PC-9 (cell line): ENCODE measurements at regions of chr7 and their contacts with region 1.

Region 1: DNA sequence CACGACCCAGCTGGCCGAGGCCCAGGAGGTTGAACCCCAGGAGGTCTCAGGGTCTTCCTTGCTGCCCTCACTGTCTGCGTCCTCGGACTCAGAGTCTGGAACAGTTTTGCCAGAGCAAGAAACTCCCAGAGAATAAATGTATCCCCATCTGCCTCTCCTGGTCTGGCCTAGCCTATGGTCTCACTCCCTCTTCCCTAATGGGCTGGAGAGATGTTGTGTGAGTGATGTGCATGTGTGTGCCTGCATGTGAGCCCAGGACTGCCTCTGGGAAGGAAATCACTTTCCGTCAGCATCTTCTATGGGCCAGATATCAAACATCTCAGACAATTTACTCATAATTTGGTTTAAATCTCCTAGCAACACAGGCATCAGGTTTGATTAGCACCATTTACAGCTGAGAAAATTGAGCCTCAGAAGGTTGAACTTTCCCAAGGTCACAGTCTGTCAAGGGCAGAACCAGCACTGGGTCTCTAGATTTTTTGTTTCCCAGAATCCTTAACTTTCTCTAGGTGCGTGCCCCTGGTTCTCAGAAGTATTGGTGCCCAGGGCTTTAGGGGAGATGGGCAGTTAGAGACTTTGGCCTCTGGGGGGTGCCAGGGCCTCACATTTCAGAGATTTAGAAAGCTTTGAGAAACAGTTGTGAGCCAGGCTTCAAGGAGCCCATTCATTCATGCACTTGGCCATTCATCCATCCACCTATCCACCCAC is 4.9 kb downstream of the TMEM270 start:
- DNase-seq: peak in 1 of 2 experiments; percentile 57
- H3K4me3 ChIP-seq: no peak overlapping the region
- H3K27ac ChIP-seq: no peak overlapping the region
- H3K4me1 ChIP-seq: no peaks in the 10 kb centered on the region
- H3K27me3 ChIP-seq: no peaks in the 10 kb centered on the region
- CTCF ChIP-seq: peak; percentile 78

Region 2: GRCh38 chr7:73786588-73786987 is 79.3 kb before region 1 on chr7:
- CTCF ChIA-PET with region 1: interaction called, 11 read pairs
- POLR2A ChIA-PET with region 1: no interaction called
- intact Hi-C with region 1: no loop called
- DNase-seq: no peak
- H3K4me3 ChIP-seq: no peak overlapping the region
- H3K27ac ChIP-seq: no peak overlapping the region
- H3K4me1 ChIP-seq: no peaks in the 10 kb centered on the region; the same call in 1 of the 2 replicates
- H3K27me3 ChIP-seq: no peaks in the 10 kb centered on the region
- CTCF ChIP-seq: no peak

Region 3: DNA sequence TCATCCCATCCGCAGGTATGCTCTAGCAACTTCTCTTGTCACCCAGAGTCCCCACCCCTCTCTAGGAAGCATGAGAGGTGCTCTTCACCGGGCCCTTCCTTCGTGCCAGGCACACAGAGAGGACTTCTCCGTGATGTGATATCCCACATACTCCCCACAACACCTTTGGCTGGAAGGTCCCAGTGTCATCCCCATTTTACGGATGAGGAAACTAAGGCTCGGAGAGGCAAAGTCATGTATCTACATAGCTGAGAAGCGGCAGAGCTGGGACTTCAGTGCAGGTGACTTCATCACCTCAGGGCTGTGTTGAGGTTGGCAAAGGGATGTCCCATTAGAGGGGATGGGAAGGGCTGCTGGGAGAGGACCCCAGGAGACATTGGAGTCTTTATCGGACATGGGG is 10.5 kb after region 1 on chr7:
- CTCF ChIA-PET with region 1: interaction called, 12 read pairs
- POLR2A ChIA-PET with region 1: no interaction called
- intact Hi-C with region 1: no loop called
- DNase-seq: no peak
- H3K4me3 ChIP-seq: no peak overlapping the region
- H3K27ac ChIP-seq: no peak overlapping the region
- H3K4me1 ChIP-seq: peaks cover 23% of the 10 kb centered on the region
- H3K27me3 ChIP-seq: no peaks in the 10 kb centered on the region
- CTCF ChIP-seq: no peak

Region 4: DNA sequence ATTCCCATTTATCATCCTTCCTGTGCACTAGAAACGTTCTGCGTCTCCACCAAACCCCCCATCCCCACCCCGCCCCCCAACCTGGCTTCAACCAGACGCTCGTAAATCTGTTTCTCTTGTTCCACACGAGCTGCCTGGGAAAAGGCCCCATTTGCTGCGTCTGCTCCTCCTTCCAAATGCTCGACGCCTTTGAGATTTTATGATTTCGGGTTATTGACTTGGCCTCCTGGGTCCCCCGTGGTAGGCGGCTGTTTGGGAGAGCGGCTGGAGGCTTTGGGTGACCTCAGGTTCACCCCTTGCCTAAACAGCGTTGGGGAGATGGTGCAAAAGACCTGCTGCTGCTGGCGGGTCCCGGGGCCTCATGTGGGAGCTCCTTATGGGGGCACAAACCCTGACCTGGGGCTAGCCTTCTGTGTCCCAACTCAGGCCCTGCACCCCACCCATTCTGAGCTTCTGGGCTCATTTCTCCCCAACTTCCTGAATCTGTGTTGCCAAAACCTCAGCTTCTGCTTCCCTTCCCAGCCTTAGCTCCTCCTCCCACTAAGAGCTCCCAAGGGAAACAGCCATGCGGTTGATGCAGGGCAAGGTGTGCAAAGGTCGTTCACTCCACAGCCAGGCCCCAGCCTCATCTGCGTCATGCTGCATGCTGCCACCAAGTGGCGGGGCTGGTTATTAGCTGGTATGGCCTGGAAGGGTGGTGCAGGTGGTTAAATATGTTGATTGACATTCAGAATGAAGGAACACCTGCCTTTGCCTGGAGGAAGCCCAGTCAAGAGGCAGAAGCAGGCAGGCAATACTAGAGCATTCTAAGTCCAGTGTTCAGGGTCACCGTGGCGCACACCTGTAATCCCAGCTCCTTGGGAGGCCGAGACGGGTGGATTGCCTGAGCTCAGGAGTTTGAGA is 113.0 kb after region 1 on chr7:
- CTCF ChIA-PET with region 1: interaction called, 4 read pairs
- POLR2A ChIA-PET with region 1: interaction called, 8 read pairs
- intact Hi-C with region 1: loop called (anchors 1 kb)
- DNase-seq: peak; percentile 90 to 91
- H3K4me3 ChIP-seq: no peak overlapping the region
- H3K27ac ChIP-seq: peak overlapping the region; percentile 33; the same call in 1 of the 2 replicates
- H3K4me1 ChIP-seq: peaks cover 11% of the 10 kb centered on the region
- H3K27me3 ChIP-seq: no peaks in the 10 kb centered on the region
- CTCF ChIP-seq: peak; percentile 74

Region 5: GRCh38 chr7:74026903-74027551 is 161.1 kb after region 1 on chr7:
- CTCF ChIA-PET with region 1: interaction called, 7 read pairs
- POLR2A ChIA-PET with region 1: no interaction called
- intact Hi-C with region 1: loop called (anchors 1 kb)
- DNase-seq: peak in 1 of 2 experiments; percentile 72
- H3K4me3 ChIP-seq: no peak overlapping the region
- H3K27ac ChIP-seq: no peak overlapping the region
- H3K4me1 ChIP-seq: peaks cover 12% of the 10 kb centered on the region
- H3K27me3 ChIP-seq: peaks cover 12% of the 10 kb centered on the region; the same call in 1 of the 2 replicates
- CTCF ChIP-seq: peak; percentile 95

Region 6: GRCh38 chr7:74401137-74401859 is 535.4 kb after region 1 on chr7:
- CTCF ChIA-PET with region 1: interaction called, 3 read pairs
- POLR2A ChIA-PET with region 1: no interaction called
- intact Hi-C with region 1: loop called (anchors 1 kb)
- DNase-seq: peak; percentile 51 to 80
- H3K4me3 ChIP-seq: no peak overlapping the region
- H3K27ac ChIP-seq: no peak overlapping the region
- H3K4me1 ChIP-seq: no peaks in the 10 kb centered on the region
- H3K27me3 ChIP-seq: no peaks in the 10 kb centered on the region
- CTCF ChIP-seq: peak; percentile 98